H1 (cell line): ENCODE measurements at regions of chr20 and their contacts with region 1.

Region 1: DNA sequence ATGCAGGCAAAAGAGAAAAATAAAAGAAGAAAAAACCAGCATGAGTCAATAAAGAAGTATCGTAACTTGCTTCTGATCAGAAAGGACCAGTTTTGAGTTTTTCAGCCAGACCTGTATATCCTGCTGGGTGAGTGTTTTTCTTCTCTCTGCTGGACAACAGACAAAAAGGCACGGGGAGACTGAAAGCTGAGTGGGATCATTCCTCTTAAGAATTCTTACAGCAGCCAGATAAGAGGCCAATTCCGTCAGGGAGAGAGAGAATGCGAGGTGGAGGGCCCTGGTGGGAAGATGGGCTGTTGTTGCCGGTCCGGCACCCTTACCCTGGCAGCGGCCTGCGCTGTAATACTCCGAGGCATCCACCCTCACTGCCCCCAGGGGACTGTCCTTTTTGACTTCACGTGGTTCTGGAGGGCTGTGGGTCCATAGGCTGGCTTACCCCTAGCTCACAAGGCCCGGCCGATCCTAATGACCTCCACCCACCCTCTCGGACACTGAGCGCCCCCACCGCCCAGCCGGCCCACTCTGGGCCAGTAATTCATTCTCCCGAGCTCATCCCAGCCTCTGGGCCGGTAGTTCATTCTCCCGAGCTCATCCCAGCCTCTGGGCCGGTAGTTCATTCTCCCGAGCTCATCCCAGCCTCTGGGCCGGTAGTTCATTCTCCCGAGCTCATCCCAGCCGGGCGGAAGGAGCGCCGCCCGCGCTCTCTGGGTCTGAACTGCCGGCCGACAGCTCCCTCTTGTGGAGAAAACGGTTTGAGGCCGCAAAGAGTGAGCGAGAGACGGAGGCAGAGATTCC is 118.3 kb upstream of the SIRPA start:
- DNase-seq: peak; percentile 50 to 97
- H3K4me3 ChIP-seq: peak overlapping the region; percentile 54 to 85 (median 66)
- H3K27ac ChIP-seq: no peak overlapping the region
- H3K4me1 ChIP-seq: peaks cover 2 to 7% (median 3%) of the 10 kb centered on the region in 4 experiments; a peak in 5 of 7 replicates
- H3K27me3 ChIP-seq: peaks cover 0 to 3% (median 1%) of the 10 kb centered on the region in 4 experiments; a peak in 4 of 7 replicates
- CTCF ChIP-seq: peak; percentile 75 to 89 (median 77)
- EP300 ChIP-seq: no peak
- POLR2A ChIP-seq: peak in 1 of 2 experiments; percentile 83; a peak in 2 of 3 replicates
- RAD21 ChIP-seq: peak; percentile 77 to 82

Region 2: GRCh38 chr20:1509237-1509636 is 267.6 kb before region 1 on chr20:
- CTCF ChIA-PET with region 1: interaction called, 29 read pairs
- POLR2A ChIA-PET with region 1: no interaction called
- DNase-seq: no peak
- H3K4me3 ChIP-seq: no peak overlapping the region
- H3K27ac ChIP-seq: no peak overlapping the region
- H3K4me1 ChIP-seq: peaks cover 0 to 3% (median 0%) of the 10 kb centered on the region in 4 experiments; a peak in 1 of 7 replicates
- H3K27me3 ChIP-seq: peaks cover 0 to 2% (median 0%) of the 10 kb centered on the region in 4 experiments; a peak in 3 of 7 replicates
- CTCF ChIP-seq: peak; percentile 2 to 52 (median 39); a peak in 3 of 4 replicates
- EP300 ChIP-seq: no peak
- POLR2A ChIP-seq: no peak
- RAD21 ChIP-seq: peak; percentile 57 to 58

Region 3: DNA sequence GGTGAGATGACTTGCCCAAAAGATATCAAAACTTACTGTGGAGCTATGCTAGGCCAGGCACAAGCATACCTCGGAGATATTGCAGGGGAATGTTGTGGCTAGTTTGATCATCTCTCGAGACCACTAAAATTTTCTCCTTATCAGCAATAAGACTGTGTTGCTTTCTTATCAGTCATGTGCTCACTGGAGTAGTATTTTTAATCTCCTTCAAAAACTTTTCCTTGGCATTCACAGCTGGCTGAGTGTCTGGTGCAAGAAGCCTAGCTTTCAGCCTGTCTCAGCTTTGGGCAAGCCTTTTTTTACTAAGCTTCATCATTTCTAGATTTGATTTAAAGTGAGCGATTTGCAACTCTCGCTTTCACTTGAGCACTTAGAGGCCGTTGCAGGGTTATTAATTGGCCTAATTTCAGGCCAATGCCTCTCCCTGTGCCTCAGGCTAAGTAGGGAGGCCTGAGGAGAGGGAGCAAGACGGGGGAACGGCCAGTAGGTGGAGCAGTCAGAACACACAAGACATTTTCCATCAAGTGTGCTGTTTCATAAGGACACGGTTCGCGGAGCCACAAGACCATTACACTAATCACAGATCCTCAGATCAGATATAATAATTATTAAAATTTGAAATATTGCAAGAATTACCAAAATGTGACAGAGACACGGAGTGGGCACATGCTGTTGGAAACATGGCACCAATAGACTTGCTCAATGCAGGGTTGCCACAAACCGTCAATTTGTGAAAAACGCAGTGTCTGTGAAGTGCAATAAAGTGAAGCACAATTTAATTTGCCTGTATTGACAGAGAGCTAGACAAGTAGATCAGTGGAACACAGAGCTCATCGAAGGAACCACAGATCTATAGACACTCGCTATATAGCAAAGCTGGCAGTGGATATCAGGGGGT is 12.5 kb before region 1 on chr20:
- CTCF ChIA-PET with region 1: interaction called, 31 read pairs
- POLR2A ChIA-PET with region 1: no interaction called
- DNase-seq: peak; percentile 69 to 73
- H3K4me3 ChIP-seq: no peak overlapping the region
- H3K27ac ChIP-seq: no peak overlapping the region
- H3K4me1 ChIP-seq: no peaks in the 10 kb centered on the region
- H3K27me3 ChIP-seq: peaks cover 0 to 6% (median 0%) of the 10 kb centered on the region in 4 experiments; a peak in 2 of 7 replicates
- CTCF ChIP-seq: peak; percentile 80 to 95 (median 92)
- EP300 ChIP-seq: no peak
- POLR2A ChIP-seq: no peak
- RAD21 ChIP-seq: peak; percentile 86 to 88